ENCODE measurements at regions of chr22 and their contacts with region 1.

Region 1: DNA sequence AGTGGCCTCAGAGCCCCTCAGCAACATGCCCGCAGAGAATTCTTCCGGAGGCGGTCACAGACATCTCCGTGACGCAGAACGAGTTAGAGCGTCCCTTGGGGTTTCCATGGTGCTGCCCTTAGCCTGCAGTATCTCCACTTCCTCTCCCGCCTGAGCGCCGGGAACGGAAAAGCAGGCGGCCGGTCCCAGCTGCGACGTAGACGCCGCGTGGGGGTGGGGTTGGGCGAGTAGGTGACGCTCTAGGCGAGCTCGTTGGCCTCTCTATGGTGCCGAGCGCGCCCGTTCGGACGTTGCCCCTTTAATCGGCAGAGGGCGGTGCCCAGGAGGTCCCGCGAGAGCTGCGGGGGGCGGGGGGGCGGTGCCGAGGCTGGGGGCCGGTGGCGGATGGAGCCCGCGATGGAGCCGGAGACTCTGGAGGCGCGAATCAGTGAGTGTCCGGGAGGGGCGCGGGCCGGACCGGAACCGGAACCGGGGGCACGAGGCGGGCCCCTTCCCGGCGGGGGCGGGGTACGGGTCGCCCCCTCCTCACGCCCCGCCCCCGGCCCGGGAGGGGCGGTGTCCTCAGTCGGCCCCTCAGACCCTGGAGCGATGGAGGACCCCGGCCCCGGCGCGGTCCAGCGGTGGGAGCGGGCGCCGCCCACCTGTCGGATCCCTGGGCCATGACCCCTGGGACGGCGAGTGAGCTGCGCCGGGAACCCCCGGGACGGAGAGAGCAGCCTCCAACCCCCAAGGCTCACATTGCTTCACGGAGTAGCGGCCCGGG is at the start of gene GGA1:
- DNase-seq: peak; percentile 90
- ATAC-seq: peak; percentile 70
- H3K4me3 Mint-ChIP-seq: peak within 1 kb of the TSS; percentile 90
- H3K27ac Mint-ChIP-seq: peak within 1 kb of the TSS; percentile 98
- H3K4me1 Mint-ChIP-seq: peaks cover 18% of the 10 kb centered on the region
- H3K27me3 Mint-ChIP-seq: no peaks in the 10 kb centered on the region
- CTCF ChIP-seq: no peak
- total RNA-seq, gene GGA1: 59.5 to 66.3 TPM (median 61.6 TPM) in 3 replicates

Region 2: GRCh38 chr22:37538590-37539357 is 69.9 kb before region 1 on chr22:
- CTCF ChIA-PET with region 1: interaction called, 41 read pairs
- POLR2A ChIA-PET with region 1: interaction called, 3 read pairs
- DNase-seq: peak; percentile 95
- ATAC-seq: peak; percentile 100
- H3K4me3 Mint-ChIP-seq: no peak overlapping the region
- H3K27ac Mint-ChIP-seq: no peak overlapping the region
- H3K4me1 Mint-ChIP-seq: peaks cover 12% of the 10 kb centered on the region
- H3K27me3 Mint-ChIP-seq: no peaks in the 10 kb centered on the region; the same call in 1 of the 2 replicates
- CTCF ChIP-seq: peak; percentile 81

Region 3: GRCh38 chr22:37566903-37567820 is 41.5 kb before region 1 on chr22:
- CTCF ChIA-PET with region 1: interaction called, 17 read pairs
- POLR2A ChIA-PET with region 1: interaction called, 8 read pairs
- DNase-seq: peak; percentile 92
- ATAC-seq: peak; percentile 81
- H3K4me3 Mint-ChIP-seq: no peak overlapping the region
- H3K27ac Mint-ChIP-seq: no peak overlapping the region
- H3K4me1 Mint-ChIP-seq: peaks cover 46% of the 10 kb centered on the region
- H3K27me3 Mint-ChIP-seq: peaks cover 10% of the 10 kb centered on the region
- CTCF ChIP-seq: peak; percentile 90

Region 4: DNA sequence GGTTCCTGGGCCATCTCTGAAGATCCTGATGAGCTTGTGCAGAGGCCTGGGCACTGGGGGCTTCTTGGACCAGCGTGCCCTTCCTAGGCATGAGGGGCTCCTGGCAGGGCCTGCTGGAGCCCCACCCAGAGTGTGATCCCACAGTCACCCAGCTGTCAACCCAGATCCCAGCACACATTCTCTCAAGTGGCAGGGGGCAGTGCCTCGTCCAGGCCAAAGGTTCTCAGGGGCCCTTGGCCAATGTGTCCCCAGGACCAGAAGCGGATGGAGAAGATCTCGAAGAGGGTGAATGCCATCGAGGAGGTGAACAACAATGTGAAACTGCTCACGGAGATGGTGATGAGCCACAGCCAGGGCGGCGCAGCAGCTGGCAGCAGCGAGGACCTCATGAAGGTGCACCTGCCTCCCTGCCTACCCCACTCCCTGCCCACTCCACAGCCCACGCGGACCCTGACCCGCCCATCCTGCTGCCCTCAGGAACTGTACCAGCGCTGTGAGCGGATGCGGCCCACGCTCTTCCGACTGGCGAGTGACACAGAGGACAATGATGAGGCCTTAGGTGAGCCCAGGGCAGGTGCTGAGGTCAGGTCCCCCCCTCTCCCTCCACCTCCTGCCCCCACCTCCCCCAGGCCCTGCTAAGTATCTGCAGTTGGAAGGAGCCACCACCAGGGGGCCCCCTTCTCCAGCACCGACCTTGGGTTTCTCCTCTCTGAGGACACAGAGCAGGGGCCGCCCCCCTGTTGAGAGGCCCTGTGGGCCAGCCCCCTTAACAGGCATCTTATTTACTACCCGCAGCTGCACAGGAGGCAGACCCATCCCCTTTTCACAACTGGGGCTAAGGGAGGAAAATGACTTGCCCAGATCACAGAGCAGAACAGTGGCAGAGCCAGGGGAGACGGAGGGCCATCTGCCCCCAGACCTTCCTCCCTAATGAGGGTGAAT is 14.7 kb after region 1 on chr22:
- CTCF ChIA-PET with region 1: interaction called, 29 read pairs
- POLR2A ChIA-PET with region 1: interaction called, 5 read pairs
- DNase-seq: peak; percentile 88
- ATAC-seq: peak; percentile 89
- H3K4me3 Mint-ChIP-seq: no peak overlapping the region
- H3K27ac Mint-ChIP-seq: no peak overlapping the region
- H3K4me1 Mint-ChIP-seq: peaks cover 3% of the 10 kb centered on the region
- H3K27me3 Mint-ChIP-seq: no peaks in the 10 kb centered on the region
- CTCF ChIP-seq: peak; percentile 88

Region 5: GRCh38 chr22:37658133-37659065 is 49.7 kb after region 1 on chr22 and contains the start of gene PDXP:
- CTCF ChIA-PET with region 1: interaction called, 34 read pairs
- POLR2A ChIA-PET with region 1: interaction called, 8 read pairs
- DNase-seq: peak; percentile 98
- ATAC-seq: peak; percentile 96
- H3K4me3 Mint-ChIP-seq: peak within 1 kb of the TSS; percentile 82
- H3K27ac Mint-ChIP-seq: peak within 1 kb of the TSS; percentile 97
- H3K4me1 Mint-ChIP-seq: peaks cover 29% of the 10 kb centered on the region
- H3K27me3 Mint-ChIP-seq: no peaks in the 10 kb centered on the region
- CTCF ChIP-seq: no peak
- total RNA-seq, gene PDXP: 36.1 to 42.5 TPM (median 42.3 TPM) in 3 replicates

Region 6: DNA sequence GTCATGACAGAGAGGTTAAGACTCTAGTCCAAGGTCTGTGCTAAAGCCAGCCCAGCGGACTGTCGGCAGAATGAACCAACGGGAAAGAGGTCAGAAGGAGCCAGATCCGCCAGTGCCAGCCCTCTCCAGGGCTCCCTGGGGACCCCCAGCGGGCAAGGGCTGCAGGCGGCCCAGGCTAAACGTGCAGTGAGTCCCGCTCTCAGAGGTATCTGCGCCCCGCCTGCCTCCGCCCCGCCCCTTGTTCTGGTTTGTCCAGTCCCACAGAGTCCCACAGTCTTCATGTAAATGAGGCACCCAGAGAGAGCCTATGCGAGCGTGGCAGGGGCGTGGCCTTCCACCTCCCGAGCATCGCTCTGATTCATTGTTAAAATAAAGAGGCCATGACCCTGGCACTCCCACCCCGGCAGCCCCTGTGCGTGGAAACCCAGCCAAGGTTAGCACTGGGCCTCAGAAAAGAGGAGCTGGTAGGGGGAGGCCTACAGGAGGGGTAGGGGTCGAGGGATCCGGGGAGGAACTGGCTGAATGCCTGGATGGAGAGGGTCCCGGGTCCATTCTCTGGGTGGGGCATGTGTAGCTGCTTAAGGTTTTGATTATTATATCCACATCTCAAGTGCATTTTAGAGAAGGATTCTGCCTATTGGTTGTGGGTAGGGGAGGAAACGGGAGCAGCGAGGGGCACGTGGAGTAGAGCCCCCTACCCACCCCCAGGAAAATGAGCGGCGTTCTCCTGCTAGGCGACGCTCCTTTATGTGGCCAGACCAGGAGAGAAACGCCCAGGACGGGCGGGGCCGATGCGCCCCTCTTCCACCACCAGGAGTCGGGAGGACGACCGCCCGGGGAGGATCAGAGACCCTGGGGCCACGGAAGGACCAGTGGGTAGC is 88.2 kb after region 1 on chr22 and contains the start of gene TRIOBP:
- CTCF ChIA-PET with region 1: interaction called, 19 read pairs
- POLR2A ChIA-PET with region 1: interaction called, 3 read pairs
- DNase-seq: peak; percentile 99
- ATAC-seq: peak; percentile 98
- H3K4me3 Mint-ChIP-seq: peak within 1 kb of the TSS; percentile 96
- H3K27ac Mint-ChIP-seq: peak within 1 kb of the TSS; percentile 91
- H3K4me1 Mint-ChIP-seq: peaks cover 11% of the 10 kb centered on the region
- H3K27me3 Mint-ChIP-seq: no peaks in the 10 kb centered on the region
- CTCF ChIP-seq: no peak
- total RNA-seq, gene TRIOBP: 54.0 to 58.9 TPM (median 56.8 TPM) in 3 replicates

Region 7: DNA sequence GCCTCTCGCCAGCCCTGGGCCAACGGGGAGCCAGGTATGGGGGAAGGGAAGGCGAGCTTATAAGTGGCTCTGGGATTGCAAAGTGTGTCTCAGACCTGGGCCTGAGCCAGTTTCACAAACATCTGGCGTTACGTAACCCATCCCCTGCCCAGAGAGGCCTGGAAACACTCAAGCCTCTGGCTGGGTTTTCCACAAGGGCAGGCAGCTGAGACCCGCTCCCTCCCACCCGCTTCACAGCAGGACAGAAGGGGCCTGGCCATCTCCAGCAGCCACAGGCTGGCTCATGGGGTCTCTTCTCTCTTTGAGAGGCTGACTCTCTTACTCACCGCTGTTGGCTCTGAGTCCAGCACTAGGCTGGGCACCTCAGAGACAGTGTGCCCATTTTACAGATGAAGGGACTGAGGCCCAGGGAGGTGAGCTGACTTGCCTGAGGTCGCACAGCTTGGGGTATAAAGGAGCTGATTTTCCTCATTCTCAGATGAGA is 132.7 kb after region 1 on chr22:
- CTCF ChIA-PET with region 1: no interaction called
- POLR2A ChIA-PET with region 1: no interaction called
- DNase-seq: no peak
- ATAC-seq: no peak; the same call in 1 of the 2 replicates
- H3K4me3 Mint-ChIP-seq: no peak overlapping the region
- H3K27ac Mint-ChIP-seq: no peak overlapping the region
- H3K4me1 Mint-ChIP-seq: peaks cover 9% of the 10 kb centered on the region
- H3K27me3 Mint-ChIP-seq: peaks cover 77% of the 10 kb centered on the region
- CTCF ChIP-seq: no peak

Region 8: GRCh38 chr22:37768273-37768672 is 159.6 kb after region 1 on chr22:
- CTCF ChIA-PET with region 1: no interaction called
- POLR2A ChIA-PET with region 1: no interaction called
- DNase-seq: peak; percentile 54
- ATAC-seq: peak; percentile 82
- H3K4me3 Mint-ChIP-seq: no peak overlapping the region
- H3K27ac Mint-ChIP-seq: no peak overlapping the region
- H3K4me1 Mint-ChIP-seq: no peaks in the 10 kb centered on the region
- H3K27me3 Mint-ChIP-seq: peaks cover 4% of the 10 kb centered on the region; the same call in 1 of the 2 replicates
- CTCF ChIP-seq: peak; percentile 47